ENCODE measurements at regions of chr2 and their contacts with region 1.

Region 1: DNA sequence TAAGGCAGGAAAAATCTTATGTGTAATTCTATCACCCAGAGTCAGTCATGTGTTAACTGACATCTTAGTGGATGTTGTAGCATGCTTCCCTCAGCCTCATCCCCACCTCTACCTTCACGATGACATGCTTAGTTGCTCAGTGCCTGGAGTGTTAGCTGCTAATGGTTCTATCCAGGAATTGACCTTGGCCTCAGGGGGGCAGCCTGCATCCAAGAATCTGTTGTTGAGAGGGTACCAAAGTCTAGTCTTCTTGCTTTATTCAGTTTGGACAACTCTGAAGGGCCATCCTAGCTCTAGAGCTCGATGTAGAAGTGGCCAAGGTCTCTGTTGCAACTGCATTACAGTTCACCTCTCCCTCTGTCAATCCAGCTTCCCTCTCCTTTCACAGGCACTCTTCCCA is 61.2 kb downstream of the ACYP2 start:
- DNase-seq: peak; percentile 85
- ATAC-seq: peak; percentile 99
- H3K4me3 ChIP-seq: no peak overlapping the region
- H3K27ac ChIP-seq: no peak overlapping the region
- H3K4me1 ChIP-seq: peaks cover 10% of the 10 kb centered on the region
- H3K27me3 ChIP-seq: no peaks in the 10 kb centered on the region
- CTCF ChIP-seq: peak; percentile 94
- EP300 ChIP-seq: no peak
- POLR2A ChIP-seq: no peak
- RAD21 ChIP-seq: peak; percentile 85

Region 2: GRCh38 chr2:54106631-54107454 is 69.7 kb before region 1 on chr2:
- CTCF ChIA-PET with region 1: no interaction called
- POLR2A ChIA-PET with region 1: no interaction called
- in situ Hi-C with region 1: no loop called
- intact Hi-C with region 1: loop called (anchors 2 kb)
- DNase-seq: peak; percentile 73
- ATAC-seq: peak; percentile 85
- H3K4me3 ChIP-seq: peak overlapping the region in 1 of 3 experiments; percentile 32; a peak in 2 of 6 replicates
- H3K27ac ChIP-seq: no peak overlapping the region
- H3K4me1 ChIP-seq: peaks cover 32% of the 10 kb centered on the region
- H3K27me3 ChIP-seq: no peaks in the 10 kb centered on the region
- CTCF ChIP-seq: peak; percentile 85
- EP300 ChIP-seq: no peak
- POLR2A ChIP-seq: no peak
- RAD21 ChIP-seq: peak; percentile 78

Region 3: GRCh38 chr2:54416166-54416813 is 239.7 kb after region 1 on chr2:
- CTCF ChIA-PET with region 1: no interaction called
- POLR2A ChIA-PET with region 1: no interaction called
- in situ Hi-C with region 1: no loop called
- intact Hi-C with region 1: loop called (anchors 5 kb)
- DNase-seq: peak; percentile 56
- ATAC-seq: peak; percentile 74
- H3K4me3 ChIP-seq: peak overlapping the region; percentile 3 to 34 (median 9); a peak in 3 of 6 replicates
- H3K27ac ChIP-seq: no peak overlapping the region
- H3K4me1 ChIP-seq: peaks cover 16% of the 10 kb centered on the region
- H3K27me3 ChIP-seq: peaks cover 1 to 7% of the 10 kb centered on the region in 2 experiments; a peak in 1 of 5 replicates
- CTCF ChIP-seq: no peak
- EP300 ChIP-seq: no peak; a peak in 1 of 4 replicates
- POLR2A ChIP-seq: no peak
- RAD21 ChIP-seq: no peak

Region 4: DNA sequence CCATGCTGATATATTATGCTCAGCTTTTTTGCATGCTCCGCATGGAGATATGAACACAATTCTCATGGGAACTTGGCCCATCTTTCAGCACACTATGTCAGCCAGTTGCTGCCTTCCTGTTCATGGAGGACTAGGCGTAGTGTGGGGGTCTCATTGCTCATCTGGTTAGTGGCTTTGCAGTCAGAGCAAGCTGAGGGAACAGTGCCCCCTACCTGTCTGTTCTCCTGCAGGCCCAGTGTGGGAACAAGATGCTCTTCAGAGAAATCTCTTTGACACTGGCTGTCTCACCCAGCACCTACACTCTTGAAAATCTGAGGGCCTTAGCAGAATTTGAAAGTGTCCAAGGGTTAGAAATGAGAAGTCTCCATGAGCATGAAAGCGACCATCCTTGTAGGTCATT is 326.6 kb after region 1 on chr2:
- CTCF ChIA-PET with region 1: interaction called, 3 read pairs
- POLR2A ChIA-PET with region 1: no interaction called
- in situ Hi-C with region 1: no loop called
- intact Hi-C with region 1: loop called (anchors 2 kb)
- DNase-seq: peak; percentile 52
- ATAC-seq: peak; percentile 87
- H3K4me3 ChIP-seq: no peak overlapping the region
- H3K27ac ChIP-seq: no peak overlapping the region
- H3K4me1 ChIP-seq: peaks cover 38% of the 10 kb centered on the region
- H3K27me3 ChIP-seq: no peaks in the 10 kb centered on the region
- CTCF ChIP-seq: peak; percentile 85
- EP300 ChIP-seq: no peak
- POLR2A ChIP-seq: no peak
- RAD21 ChIP-seq: peak; percentile 80

Region 5: GRCh38 chr2:54803783-54804751 is 627.5 kb after region 1 on chr2:
- CTCF ChIA-PET with region 1: no interaction called
- POLR2A ChIA-PET with region 1: no interaction called
- in situ Hi-C with region 1: no loop called
- intact Hi-C with region 1: no loop called
- DNase-seq: no peak
- ATAC-seq: no peak
- H3K4me3 ChIP-seq: no peak overlapping the region
- H3K27ac ChIP-seq: no peak overlapping the region
- H3K4me1 ChIP-seq: peaks cover 9% of the 10 kb centered on the region
- H3K27me3 ChIP-seq: no peaks in the 10 kb centered on the region
- CTCF ChIP-seq: no peak
- EP300 ChIP-seq: no peak
- POLR2A ChIP-seq: no peak
- RAD21 ChIP-seq: no peak

Measured in HepG2 (cell line).